CD4-positive, alpha-beta memory T cell (primary cell): ENCODE measurements at regions of chr20 and their contacts with region 1.

Region 1: DNA sequence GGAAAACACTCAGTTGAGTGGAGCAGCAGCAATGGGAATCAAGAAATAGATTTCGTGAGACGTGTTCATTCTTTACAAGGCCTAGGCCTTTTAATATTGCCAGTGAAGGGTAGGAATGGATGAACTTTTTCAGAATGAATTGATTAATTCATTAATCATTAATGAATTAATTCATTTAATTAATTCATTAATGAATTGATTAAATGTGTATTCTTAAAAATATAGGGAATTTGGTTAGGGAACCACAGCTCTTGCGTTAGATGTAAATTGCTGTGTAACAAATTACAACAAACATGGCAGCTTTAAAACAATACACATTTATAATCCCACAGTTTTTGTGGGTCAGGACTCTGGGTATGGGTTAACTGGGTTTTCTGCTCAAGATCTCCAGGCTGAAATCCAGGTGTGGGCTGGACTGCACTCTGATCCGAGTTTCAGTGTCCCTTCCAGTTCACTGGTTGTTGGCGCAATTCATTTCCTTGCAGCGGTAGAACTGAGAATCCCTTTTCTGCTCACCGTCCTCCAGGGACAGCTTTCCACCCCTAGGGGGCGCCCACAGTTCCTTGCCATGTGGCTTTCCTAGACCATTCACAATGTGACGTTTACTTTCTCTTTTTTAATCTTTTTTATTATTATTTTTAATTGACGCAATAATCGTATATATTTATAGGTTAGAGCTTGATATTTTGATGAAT is 32.8 kb upstream of the BCAS1 start:
- DNase-seq: peak; percentile 38 to 64 (median 51)
- H3K4me3 ChIP-seq: no peak overlapping the region
- H3K4me3 Mint-ChIP-seq: no peak overlapping the region
- H3K27ac ChIP-seq: no peak overlapping the region
- H3K27ac Mint-ChIP-seq: no peak overlapping the region
- H3K4me1 ChIP-seq: no peaks in the 10 kb centered on the region
- H3K4me1 Mint-ChIP-seq: peaks cover 0 to 2% (median under 1%) of the 10 kb centered on the region in 4 donors
- H3K27me3 ChIP-seq: no peaks in the 10 kb centered on the region
- H3K27me3 Mint-ChIP-seq: peaks cover 2 to 3% of the 10 kb centered on the region in 2 donors

Region 2: GRCh38 chr20:54078296-54078984 is 24.8 kb before region 1 on chr20:
- CTCF ChIA-PET with region 1: interaction called, 12 read pairs
- POLR2A ChIA-PET with region 1: no interaction called
- intact Hi-C with region 1: no loop called
- DNase-seq: peak in 3 of 5 donors; percentile 12 to 14 (median 13)
- H3K4me3 ChIP-seq: no peak overlapping the region
- H3K4me3 Mint-ChIP-seq: peak overlapping the region in 7 of 8 donors; percentile 44 to 86 (median 70)
- H3K27ac ChIP-seq: no peak overlapping the region
- H3K27ac Mint-ChIP-seq: peak overlapping the region; percentile 44 to 88 (median 59)
- H3K4me1 ChIP-seq: peaks cover 17% of the 10 kb centered on the region
- H3K4me1 Mint-ChIP-seq: peaks cover 11 to 27% (median 20%) of the 10 kb centered on the region in 4 donors
- H3K27me3 ChIP-seq: no peaks in the 10 kb centered on the region
- H3K27me3 Mint-ChIP-seq: no peaks in the 10 kb centered on the region

Region 3: GRCh38 chr20:54118220-54119011 is 15.2 kb after region 1 on chr20:
- CTCF ChIA-PET with region 1: interaction called, 10 read pairs
- POLR2A ChIA-PET with region 1: no interaction called
- intact Hi-C with region 1: no loop called
- DNase-seq: no peak
- H3K4me3 ChIP-seq: no peak overlapping the region
- H3K4me3 Mint-ChIP-seq: no peak overlapping the region
- H3K27ac ChIP-seq: no peak overlapping the region
- H3K27ac Mint-ChIP-seq: no peak overlapping the region
- H3K4me1 ChIP-seq: no peaks in the 10 kb centered on the region
- H3K4me1 Mint-ChIP-seq: no peaks in the 10 kb centered on the region
- H3K27me3 ChIP-seq: no peaks in the 10 kb centered on the region
- H3K27me3 Mint-ChIP-seq: peaks cover 2 to 5% of the 10 kb centered on the region in 2 donors